Aorta (tissue), 5 donors: ENCODE measurements at regions of chr2 and their contacts with region 1.

Region 1: DNA sequence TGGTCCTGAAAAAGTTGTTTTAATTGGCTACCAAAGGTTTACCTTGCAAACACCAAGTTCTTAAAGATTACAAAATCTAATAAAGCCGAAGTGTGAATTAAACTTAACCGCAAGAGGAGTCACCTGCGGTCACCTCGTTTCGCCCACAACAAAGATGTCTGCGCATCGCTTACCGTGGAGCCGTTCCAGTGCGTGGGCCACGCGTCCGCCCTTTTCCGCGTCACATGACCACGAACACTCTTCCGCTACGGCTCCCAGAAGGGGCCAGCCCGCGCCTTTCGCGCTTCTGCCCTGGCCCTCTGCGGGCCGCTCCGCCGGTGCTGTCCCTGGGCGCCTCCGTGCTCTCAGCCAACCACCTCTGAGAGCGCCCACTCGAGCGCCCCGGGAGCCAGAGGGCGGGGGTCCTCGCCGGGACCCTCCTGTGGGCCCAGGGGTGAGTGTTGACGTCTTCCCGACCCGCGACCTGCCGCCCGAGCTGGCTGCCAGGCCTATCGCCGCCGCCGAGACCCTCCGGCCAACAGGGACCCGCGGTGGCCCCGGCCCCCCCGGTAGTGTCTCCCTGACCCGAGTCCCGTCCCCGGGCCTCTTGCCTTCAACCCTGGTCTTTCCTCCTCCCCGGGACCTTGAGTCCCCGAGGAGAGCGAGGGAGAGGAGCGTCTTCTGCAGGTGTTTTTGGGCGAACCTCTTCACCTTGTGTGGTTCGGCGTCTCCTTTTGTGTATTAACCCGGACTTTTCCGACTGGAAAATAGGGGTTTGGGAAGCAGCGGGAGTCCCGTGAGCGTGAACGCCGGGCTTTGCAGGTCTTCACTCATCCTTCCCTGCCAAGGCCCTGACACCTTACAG is at the start of gene MFF:
- DNase-seq: peak; percentile 96 to 98
- ATAC-seq: peak; percentile 100
- H3K4me3 ChIP-seq: peak within 1 kb of the TSS; percentile 95 to 97
- H3K27ac ChIP-seq: peak within 1 kb of the TSS; percentile 73 to 85
- H3K4me1 ChIP-seq: peaks cover 0 to 3% of the 10 kb centered on the region in 2 donors
- H3K27me3 ChIP-seq: no peaks in the 10 kb centered on the region
- total RNA-seq, gene MFF: 57.4 to 76.9 TPM

Region 2: GRCh38 chr2:226354434-226354833 is 970.8 kb before region 1 on chr2:
- intact Hi-C with region 1: no loop called
- DNase-seq: no peak
- ATAC-seq: no peak
- H3K4me3 ChIP-seq: no peak overlapping the region
- H3K27ac ChIP-seq: no peak overlapping the region
- H3K4me1 ChIP-seq: no peaks in the 10 kb centered on the region
- H3K27me3 ChIP-seq: no peaks in the 10 kb centered on the region

Region 3: DNA sequence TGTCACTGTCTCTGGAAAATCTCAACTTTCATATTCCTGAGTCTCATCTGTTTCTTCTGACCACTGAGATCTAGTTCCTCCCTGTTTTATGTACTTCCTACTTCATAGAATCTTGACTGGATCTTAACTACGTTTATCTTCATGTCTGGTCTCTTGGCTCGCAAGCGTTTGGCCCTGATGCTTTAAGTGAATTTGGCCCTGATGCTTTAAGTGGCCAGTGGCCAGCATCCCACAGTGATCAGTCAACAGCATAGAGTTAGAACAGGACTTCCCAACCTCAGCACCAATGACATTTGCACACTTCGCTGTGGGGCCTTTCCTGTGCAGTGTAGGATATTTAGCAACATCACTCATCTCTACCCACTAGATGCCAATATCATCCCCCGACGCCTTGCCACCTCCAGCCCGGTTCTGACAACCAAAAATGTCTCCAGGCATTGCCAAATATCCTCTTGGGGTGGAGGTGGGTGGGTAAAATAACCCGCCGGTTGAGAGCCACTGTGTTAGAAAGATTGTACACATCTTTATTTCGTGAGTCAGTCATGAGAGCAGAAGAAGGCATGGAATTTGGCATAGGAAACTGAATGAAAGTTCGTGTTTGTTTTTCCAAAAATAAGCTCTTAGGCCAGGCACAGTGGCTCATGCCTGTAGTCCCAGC is 41.7 kb after region 1 on chr2:
- intact Hi-C with region 1: loop called (anchors 5 kb)
- DNase-seq: peak; percentile 70 to 80
- ATAC-seq: peak; percentile 83
- H3K4me3 ChIP-seq: no peak overlapping the region
- H3K27ac ChIP-seq: peak overlapping the region; percentile 51 to 67
- H3K4me1 ChIP-seq: peaks cover 0 to 3% of the 10 kb centered on the region in 2 donors
- H3K27me3 ChIP-seq: no peaks in the 10 kb centered on the region

Region 4: GRCh38 chr2:227376911-227377396 is 51.7 kb after region 1 on chr2:
- intact Hi-C with region 1: no loop called
- DNase-seq: no peak
- ATAC-seq: no peak
- H3K4me3 ChIP-seq: no peak overlapping the region
- H3K27ac ChIP-seq: no peak overlapping the region
- H3K4me1 ChIP-seq: no peaks in the 10 kb centered on the region
- H3K27me3 ChIP-seq: no peaks in the 10 kb centered on the region

Region 5: GRCh38 chr2:227460070-227460485 is 134.9 kb after region 1 on chr2:
- intact Hi-C with region 1: loop called in 1 of 2 experiments (anchors 10 kb)
- DNase-seq: peak in 1 of 2 donors; percentile 63
- ATAC-seq: no peak
- H3K4me3 ChIP-seq: no peak overlapping the region
- H3K27ac ChIP-seq: no peak overlapping the region
- H3K4me1 ChIP-seq: no peaks in the 10 kb centered on the region
- H3K27me3 ChIP-seq: no peaks in the 10 kb centered on the region